Naive thymus-derived CD4-positive, alpha-beta T cell (primary cell): ENCODE measurements at regions of chr2 and their contacts with region 1.

Region 1: GRCh38 chr2:65227425-65228262 is at the start of gene ACTR2:
- DNase-seq: peak; percentile 86 to 94 (median 93)
- ATAC-seq: peak; percentile 97
- H3K4me3 ChIP-seq: peak within 1 kb of the TSS; percentile 99
- H3K4me3 Mint-ChIP-seq: peak within 1 kb of the TSS; percentile 95 to 100 (median 98)
- H3K27ac ChIP-seq: peak within 1 kb of the TSS; percentile 97
- H3K27ac Mint-ChIP-seq: peak within 1 kb of the TSS; percentile 97 to 99 (median 98)
- H3K4me1 ChIP-seq: peaks cover 25 to 38% of the 10 kb centered on the region in 2 donors
- H3K4me1 Mint-ChIP-seq: peaks cover 24 to 54% (median 44%) of the 10 kb centered on the region in 7 donors
- H3K27me3 ChIP-seq: no peaks in the 10 kb centered on the region
- H3K27me3 Mint-ChIP-seq: no peaks in the 10 kb centered on the region
- total RNA-seq, gene ACTR2: 180 to 435 (median 287) TPM

Region 2: GRCh38 chr2:64963719-64964118 is 263.9 kb before region 1 on chr2:
- CTCF ChIA-PET with region 1: no interaction called
- POLR2A ChIA-PET with region 1: no interaction called
- intact Hi-C with region 1: no loop called
- DNase-seq: no peak
- ATAC-seq: no peak
- H3K4me3 ChIP-seq: no peak overlapping the region
- H3K4me3 Mint-ChIP-seq: no peak overlapping the region
- H3K27ac ChIP-seq: no peak overlapping the region
- H3K27ac Mint-ChIP-seq: no peak overlapping the region
- H3K4me1 ChIP-seq: no peaks in the 10 kb centered on the region
- H3K4me1 Mint-ChIP-seq: no peaks in the 10 kb centered on the region
- H3K27me3 ChIP-seq: no peaks in the 10 kb centered on the region
- H3K27me3 Mint-ChIP-seq: peaks cover 0 to 12% (median 0%) of the 10 kb centered on the region in 5 donors

Region 3: GRCh38 chr2:65240657-65241056 is 13.0 kb after region 1 on chr2:
- CTCF ChIA-PET with region 1: interaction called, 4 read pairs
- POLR2A ChIA-PET with region 1: interaction called, 4 read pairs
- intact Hi-C with region 1: loop called (anchors 1 kb)
- DNase-seq: no peak
- ATAC-seq: no peak
- H3K4me3 ChIP-seq: no peak overlapping the region
- H3K4me3 Mint-ChIP-seq: peak overlapping the region in 3 of 10 donors; percentile 7 to 39 (median 23)
- H3K27ac ChIP-seq: no peak overlapping the region
- H3K27ac Mint-ChIP-seq: no peak overlapping the region
- H3K4me1 ChIP-seq: peaks cover 6 to 35% of the 10 kb centered on the region in 2 donors
- H3K4me1 Mint-ChIP-seq: peaks cover 23 to 73% (median 62%) of the 10 kb centered on the region in 7 donors
- H3K27me3 ChIP-seq: no peaks in the 10 kb centered on the region
- H3K27me3 Mint-ChIP-seq: no peaks in the 10 kb centered on the region